H1 (cell line): ENCODE measurements at regions of chr17 and their contacts with region 1.

Region 1: GRCh38 chr17:19260958-19261357 is 23.8 kb downstream of the EPN2 start:
- DNase-seq: no peak
- H3K4me3 ChIP-seq: no peak overlapping the region
- H3K27ac ChIP-seq: no peak overlapping the region
- H3K4me1 ChIP-seq: peaks cover 0 to 6% (median under 1%) of the 10 kb centered on the region in 4 experiments; a peak in 4 of 7 replicates
- H3K27me3 ChIP-seq: no peaks in the 10 kb centered on the region
- CTCF ChIP-seq: peak in 1 of 3 experiments; percentile 21; a peak in 1 of 4 replicates
- EP300 ChIP-seq: no peak
- POLR2A ChIP-seq: no peak
- RAD21 ChIP-seq: no peak; a peak in 1 of 4 replicates

Region 2: GRCh38 chr17:19248144-19248927 is 12.6 kb before region 1 on chr17:
- CTCF ChIA-PET with region 1: interaction called, 11 read pairs
- POLR2A ChIA-PET with region 1: interaction called, 3 read pairs
- DNase-seq: no peak
- H3K4me3 ChIP-seq: no peak overlapping the region
- H3K27ac ChIP-seq: no peak overlapping the region
- H3K4me1 ChIP-seq: peaks cover 0 to 3% (median 2%) of the 10 kb centered on the region in 4 experiments; a peak in 2 of 7 replicates
- H3K27me3 ChIP-seq: no peaks in the 10 kb centered on the region
- CTCF ChIP-seq: no peak
- EP300 ChIP-seq: no peak
- POLR2A ChIP-seq: no peak
- RAD21 ChIP-seq: no peak

Region 3: DNA sequence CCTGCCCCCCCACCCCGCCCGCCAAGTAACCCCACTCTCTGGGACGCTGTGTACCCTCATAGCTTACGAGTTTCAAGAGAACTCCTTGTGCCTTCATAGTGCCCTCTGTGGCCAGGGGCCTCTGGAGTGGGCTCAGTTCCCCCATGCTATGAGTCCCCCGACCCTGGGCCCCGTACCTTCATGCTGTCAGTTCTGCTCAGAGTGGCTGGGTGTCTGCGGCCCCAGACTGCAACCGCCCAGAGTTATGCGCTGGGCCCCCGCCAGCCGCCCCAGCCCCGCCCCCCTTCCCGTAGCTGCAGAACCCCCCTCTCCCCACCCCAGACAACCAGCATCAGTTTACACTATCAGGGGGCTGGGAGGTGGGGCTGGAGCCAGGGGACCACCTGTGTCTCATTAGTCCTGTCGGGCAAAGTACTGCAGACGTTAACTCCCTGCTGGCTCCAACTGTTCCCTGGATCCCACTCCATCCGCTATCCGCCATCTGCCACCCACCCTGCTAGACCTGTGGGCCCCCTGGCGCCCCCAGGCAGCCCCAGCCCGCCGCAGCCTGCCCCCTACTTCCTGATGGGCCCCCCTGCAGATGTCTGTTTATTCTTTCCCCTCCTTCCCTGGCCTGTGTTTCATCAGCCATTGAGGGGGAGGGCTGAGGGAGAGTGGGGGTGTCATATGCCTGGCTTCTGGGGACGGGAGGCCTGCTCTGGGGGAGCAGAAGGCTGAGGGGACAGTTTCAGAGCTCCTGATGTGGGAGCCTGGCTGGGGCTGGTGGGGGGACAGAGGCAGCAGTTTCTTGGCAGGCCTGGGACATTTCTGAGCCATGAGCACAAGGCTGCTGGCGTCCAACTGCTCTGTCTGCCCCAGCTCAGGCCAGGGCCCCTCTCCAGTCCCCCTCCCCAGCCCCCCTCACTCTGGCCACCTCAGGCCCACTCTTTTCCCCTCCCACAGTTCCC is 126.3 kb after region 1 on chr17 and contains the start of gene MFAP4:
- CTCF ChIA-PET with region 1: no interaction called
- POLR2A ChIA-PET with region 1: no interaction called
- DNase-seq: peak in 1 of 2 experiments; percentile 66
- H3K4me3 ChIP-seq: peak within 1 kb of the TSS in 3 of 4 experiments; percentile 17 to 49 (median 18); a peak in 4 of 8 replicates
- H3K27ac ChIP-seq: peak within 1 kb of the TSS; percentile 30; the same call in 1 of the 2 replicates
- H3K4me1 ChIP-seq: peaks cover 8 to 22% (median 15%) of the 10 kb centered on the region in 4 experiments
- H3K27me3 ChIP-seq: no peaks in the 10 kb centered on the region
- CTCF ChIP-seq: no peak
- EP300 ChIP-seq: no peak
- POLR2A ChIP-seq: no peak
- RAD21 ChIP-seq: no peak
- total RNA-seq, gene MFAP4: 3.6 and 3.8 TPM in 2 replicates